ENCODE measurements at regions of chr11 and their contacts with region 1.

Region 1: DNA sequence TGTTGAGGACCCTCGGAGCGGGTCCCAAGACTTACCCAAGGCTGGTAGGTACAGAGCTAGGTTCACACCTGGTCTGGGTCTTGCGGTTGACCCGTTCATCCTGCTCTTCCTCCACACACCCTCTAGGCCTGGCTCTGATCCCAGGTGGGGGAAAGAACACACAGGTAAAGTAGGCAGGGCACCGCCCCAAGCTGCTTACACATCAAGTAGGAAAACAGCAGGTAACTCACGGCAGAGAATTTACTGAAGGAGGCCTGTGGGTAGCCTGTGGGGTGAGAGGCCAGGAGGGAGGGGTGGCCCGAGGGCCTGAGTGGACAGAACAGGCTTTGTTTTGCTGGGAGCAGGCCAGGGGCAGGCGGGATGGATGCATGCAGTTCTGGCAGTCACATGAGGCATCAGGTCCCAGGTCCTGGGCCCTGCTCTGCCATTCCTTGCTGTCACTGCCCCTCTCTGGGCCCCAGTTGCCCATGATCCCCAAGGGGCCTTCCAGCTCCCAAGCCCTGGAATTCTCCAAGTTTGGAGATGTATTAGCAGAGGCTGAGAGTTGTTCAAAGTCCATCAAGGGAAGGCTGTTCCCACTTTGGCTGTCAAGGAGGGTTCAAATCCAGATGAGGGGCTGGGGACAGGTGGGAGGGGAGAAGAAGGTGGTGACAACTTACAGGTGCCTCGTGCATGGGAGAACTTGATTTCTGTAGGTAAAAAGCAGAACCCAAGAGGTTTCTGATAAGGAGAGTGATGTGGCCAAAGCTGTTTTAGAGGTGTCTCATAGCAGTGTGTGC is 5.7 kb downstream of the TSKU start:
- DNase-seq: peak; percentile 66
- ATAC-seq: peak; percentile 27
- H3K4me3 ChIP-seq: peak overlapping the region in 1 of 3 experiments; percentile 22; a peak in 1 of 6 replicates
- H3K27ac ChIP-seq: peak overlapping the region; percentile 54
- H3K4me1 ChIP-seq: peaks cover 92% of the 10 kb centered on the region
- H3K27me3 ChIP-seq: no peaks in the 10 kb centered on the region
- CTCF ChIP-seq: no peak
- EP300 ChIP-seq: no peak
- POLR2A ChIP-seq: no peak
- RAD21 ChIP-seq: no peak

Region 2: GRCh38 chr11:76768088-76768908 is 20.6 kb before region 1 on chr11:
- CTCF ChIA-PET with region 1: no interaction called
- POLR2A ChIA-PET with region 1: interaction called, 39 read pairs
- in situ Hi-C with region 1: no loop called
- intact Hi-C with region 1: no loop called
- DNase-seq: peak; percentile 29
- ATAC-seq: peak; percentile 33
- H3K4me3 ChIP-seq: peak overlapping the region; percentile 18 to 57 (median 34); a peak in 3 of 6 replicates
- H3K27ac ChIP-seq: peak overlapping the region; percentile 88
- H3K4me1 ChIP-seq: peaks cover 89% of the 10 kb centered on the region
- H3K27me3 ChIP-seq: no peaks in the 10 kb centered on the region
- CTCF ChIP-seq: no peak
- EP300 ChIP-seq: no peak
- POLR2A ChIP-seq: no peak
- RAD21 ChIP-seq: no peak

Measured in HepG2 (cell line).